PC-3 (cell line): ENCODE measurements at regions of chr6 and their contacts with region 1.

Region 1: GRCh38 chr6:63635588-63636517 is at the start of gene PHF3:
- DNase-seq: peak; percentile 82
- ATAC-seq: peak; percentile 83
- H3K4me3 ChIP-seq: peak within 1 kb of the TSS; percentile 90
- H3K27ac ChIP-seq: peak within 1 kb of the TSS; percentile 67
- H3K4me1 ChIP-seq: peaks cover 16% of the 10 kb centered on the region
- H3K27me3 ChIP-seq: no peaks in the 10 kb centered on the region
- CTCF ChIP-seq: no peak
- total RNA-seq, gene PHF3: 17.9 and 21.8 TPM in 2 replicates

Region 2: DNA sequence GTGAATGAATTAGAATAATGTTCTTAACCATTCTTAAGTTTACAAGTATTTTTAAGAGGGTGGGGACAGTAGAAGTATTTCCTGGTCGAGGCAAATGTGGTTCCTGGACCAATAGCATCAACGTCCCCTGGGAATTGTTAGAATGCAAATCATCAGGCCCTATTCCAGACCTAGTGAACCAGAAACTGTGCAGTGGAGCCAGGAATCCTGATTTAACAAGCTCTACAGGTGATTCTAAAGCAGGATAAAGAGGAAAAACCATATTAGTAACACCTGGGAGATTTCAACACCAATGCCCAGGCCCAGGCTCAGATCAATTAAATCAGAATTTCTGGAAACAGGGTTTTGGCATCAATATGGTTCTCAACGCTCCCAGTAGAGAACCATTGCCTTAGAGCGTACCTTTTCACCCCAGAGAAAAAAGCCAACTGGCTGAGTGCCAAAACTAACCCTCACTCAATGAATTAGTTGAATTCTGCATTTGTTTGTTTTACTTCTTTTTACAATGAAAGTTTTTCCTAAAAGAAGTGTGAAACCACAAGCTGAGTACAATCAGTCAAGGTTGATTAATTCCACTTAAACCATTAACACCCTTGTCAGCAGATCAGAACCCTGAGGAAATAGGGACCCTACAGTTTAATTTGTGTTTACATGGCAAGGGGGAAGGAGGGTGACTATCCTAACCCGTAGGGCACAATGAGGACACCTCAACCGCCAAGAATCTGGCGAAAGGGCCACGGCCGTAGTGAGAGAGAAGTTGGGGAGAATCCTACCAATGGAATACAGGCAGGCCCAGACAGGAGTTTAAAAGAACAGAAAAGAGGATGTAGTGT is 98.5 kb before region 1 on chr6:
- CTCF ChIA-PET with region 1: no interaction called
- POLR2A ChIA-PET with region 1: interaction called, 11 read pairs
- intact Hi-C with region 1: no loop called
- DNase-seq: peak; percentile 2
- ATAC-seq: no peak
- H3K4me3 ChIP-seq: no peak overlapping the region
- H3K27ac ChIP-seq: no peak overlapping the region
- H3K4me1 ChIP-seq: no peaks in the 10 kb centered on the region
- H3K27me3 ChIP-seq: no peaks in the 10 kb centered on the region
- CTCF ChIP-seq: no peak

Region 3: GRCh38 chr6:63571881-63572732 is 63.7 kb before region 1 on chr6 and contains the starts of genes LOC128125822 and PTP4A1:
- CTCF ChIA-PET with region 1: no interaction called
- POLR2A ChIA-PET with region 1: no interaction called
- intact Hi-C with region 1: loop called (anchors 5 kb)
- DNase-seq: peak; percentile 93
- ATAC-seq: peak; percentile 86
- H3K4me3 ChIP-seq: peak within 1 kb of the TSS; percentile 84
- H3K27ac ChIP-seq: peak within 1 kb of the TSS; percentile 99
- H3K4me1 ChIP-seq: peaks cover 18% of the 10 kb centered on the region
- H3K27me3 ChIP-seq: no peaks in the 10 kb centered on the region
- CTCF ChIP-seq: no peak
- total RNA-seq, gene PTP4A1: 29.9 and 45.7 TPM in 2 replicates

Region 4: GRCh38 chr6:63584566-63584965 is 51.3 kb before region 1 on chr6:
- CTCF ChIA-PET with region 1: no interaction called
- POLR2A ChIA-PET with region 1: interaction called, 27 read pairs
- intact Hi-C with region 1: no loop called
- DNase-seq: no peak
- ATAC-seq: no peak
- H3K4me3 ChIP-seq: no peak overlapping the region
- H3K27ac ChIP-seq: no peak overlapping the region
- H3K4me1 ChIP-seq: no peaks in the 10 kb centered on the region
- H3K27me3 ChIP-seq: no peaks in the 10 kb centered on the region
- CTCF ChIP-seq: no peak

Region 5: DNA sequence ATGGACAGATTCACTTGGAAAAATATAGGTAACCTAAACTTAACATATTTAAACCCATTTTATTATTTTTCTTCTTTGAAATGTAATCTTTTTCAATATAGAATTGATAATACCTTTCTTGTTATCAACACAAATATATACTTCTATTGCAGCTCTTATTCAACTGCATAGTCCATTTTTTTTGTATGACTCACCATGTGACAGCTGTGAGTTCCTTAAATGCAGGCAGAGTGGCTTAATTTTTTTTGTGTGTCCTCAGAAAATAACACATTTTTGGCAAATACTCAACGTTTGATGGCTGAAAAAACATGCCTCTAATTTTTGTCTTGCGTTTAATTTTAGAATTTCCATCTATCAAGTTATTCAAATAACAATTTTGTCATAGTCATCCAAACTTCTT is 454.5 kb after region 1 on chr6:
- CTCF ChIA-PET with region 1: no interaction called
- POLR2A ChIA-PET with region 1: no interaction called
- intact Hi-C with region 1: no loop called
- DNase-seq: peak; percentile 30
- ATAC-seq: no peak
- H3K4me3 ChIP-seq: no peak overlapping the region
- H3K27ac ChIP-seq: no peak overlapping the region
- H3K4me1 ChIP-seq: no peaks in the 10 kb centered on the region
- H3K27me3 ChIP-seq: no peaks in the 10 kb centered on the region
- CTCF ChIP-seq: no peak